ENCODE measurements at regions of chr4 and their contacts with region 1.

Region 1: GRCh38 chr4:45317276-45317675 is 590.9 kb upstream of the GNPDA2 start:
- DNase-seq: no peak
- ATAC-seq: peak; percentile 92 to 97 (median 94)
- H3K4me3 ChIP-seq: no peak overlapping the region
- H3K27ac ChIP-seq: peak overlapping the region in 5 of 12 donors; percentile 13 to 59 (median 42)
- H3K4me1 ChIP-seq: peaks cover 0 to 7% (median 0%) of the 10 kb centered on the region in 12 donors
- H3K27me3 ChIP-seq: no peaks in the 10 kb centered on the region
- CTCF ChIP-seq: no peak
- POLR2A ChIP-seq: no peak

Region 2: GRCh38 chr4:45120163-45120562 is 197.1 kb before region 1 on chr4:
- intact Hi-C with region 1: loop called in 1 of 10 experiments (anchors 10 kb)
- DNase-seq: peak in 2 of 5 donors; percentile 21 to 31
- ATAC-seq: peak; percentile 96 to 98 (median 96)
- H3K4me3 ChIP-seq: no peak overlapping the region
- H3K27ac ChIP-seq: peak overlapping the region in 9 of 12 donors; percentile 24 to 71 (median 43)
- H3K4me1 ChIP-seq: peaks cover 0 to 3% (median 0%) of the 10 kb centered on the region in 12 donors
- H3K27me3 ChIP-seq: no peaks in the 10 kb centered on the region
- CTCF ChIP-seq: no peak
- POLR2A ChIP-seq: peak in 1 of 2 donors; percentile 35

Region 3: DNA sequence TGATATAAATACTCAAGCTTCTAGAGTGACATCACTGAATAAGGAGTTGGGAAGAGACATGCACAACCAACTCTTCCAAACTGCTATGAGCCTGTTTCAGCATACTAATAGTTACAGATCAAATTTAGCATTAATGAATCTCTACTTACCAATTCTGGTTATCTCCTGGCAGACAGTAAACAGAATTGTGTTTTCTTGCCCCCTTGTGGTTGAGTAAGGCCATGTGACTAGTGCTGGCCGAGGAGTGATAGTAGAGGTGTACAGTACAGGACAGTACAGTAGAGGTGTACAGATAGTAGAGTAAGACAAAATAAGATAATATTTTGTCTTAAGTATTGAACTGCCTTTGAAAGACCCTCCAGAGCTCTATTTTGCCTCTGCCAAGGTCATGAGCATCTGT is 125.2 kb after region 1 on chr4:
- intact Hi-C with region 1: loop called in 1 of 10 experiments (anchors 10 kb)
- DNase-seq: no peak
- ATAC-seq: peak in 3 of 4 donors; percentile 59 to 65 (median 62)
- H3K4me3 ChIP-seq: no peak overlapping the region
- H3K27ac ChIP-seq: no peak overlapping the region
- H3K4me1 ChIP-seq: peaks cover 0 to 5% (median 0%) of the 10 kb centered on the region in 12 donors
- H3K27me3 ChIP-seq: no peaks in the 10 kb centered on the region
- CTCF ChIP-seq: peak in 9 of 12 donors; percentile 6 to 47 (median 28)
- POLR2A ChIP-seq: no peak

Region 4: GRCh38 chr4:45596379-45597101 is 279.3 kb after region 1 on chr4:
- intact Hi-C with region 1: no loop called
- DNase-seq: no peak
- ATAC-seq: no peak
- H3K4me3 ChIP-seq: no peak overlapping the region
- H3K27ac ChIP-seq: no peak overlapping the region
- H3K4me1 ChIP-seq: no peaks in the 10 kb centered on the region
- H3K27me3 ChIP-seq: no peaks in the 10 kb centered on the region
- CTCF ChIP-seq: no peak
- POLR2A ChIP-seq: no peak